Activated CD4-positive, alpha-beta T cell treated with anti-CD3 and anti-CD28 coated beads, Interleukin-2, amount 10 ng/mL, durations not matched to agents 24 days and 14 days (primary cell): ENCODE measurements at regions of chr14 and their contacts with region 1.

Region 1: GRCh38 chr14:23095196-23096108 is at the start of gene C14orf119:
- DNase-seq: peak; percentile 100
- H3K4me3 Mint-ChIP-seq: no peak within 1 kb of the TSS
- H3K27ac Mint-ChIP-seq: no peak within 1 kb of the TSS
- H3K4me1 Mint-ChIP-seq: peaks cover 29% of the 10 kb centered on the region
- H3K27me3 Mint-ChIP-seq: no peaks in the 10 kb centered on the region
- total RNA-seq, gene C14orf119: 50.9 and 54.3 TPM in 2 replicates

Region 2: DNA sequence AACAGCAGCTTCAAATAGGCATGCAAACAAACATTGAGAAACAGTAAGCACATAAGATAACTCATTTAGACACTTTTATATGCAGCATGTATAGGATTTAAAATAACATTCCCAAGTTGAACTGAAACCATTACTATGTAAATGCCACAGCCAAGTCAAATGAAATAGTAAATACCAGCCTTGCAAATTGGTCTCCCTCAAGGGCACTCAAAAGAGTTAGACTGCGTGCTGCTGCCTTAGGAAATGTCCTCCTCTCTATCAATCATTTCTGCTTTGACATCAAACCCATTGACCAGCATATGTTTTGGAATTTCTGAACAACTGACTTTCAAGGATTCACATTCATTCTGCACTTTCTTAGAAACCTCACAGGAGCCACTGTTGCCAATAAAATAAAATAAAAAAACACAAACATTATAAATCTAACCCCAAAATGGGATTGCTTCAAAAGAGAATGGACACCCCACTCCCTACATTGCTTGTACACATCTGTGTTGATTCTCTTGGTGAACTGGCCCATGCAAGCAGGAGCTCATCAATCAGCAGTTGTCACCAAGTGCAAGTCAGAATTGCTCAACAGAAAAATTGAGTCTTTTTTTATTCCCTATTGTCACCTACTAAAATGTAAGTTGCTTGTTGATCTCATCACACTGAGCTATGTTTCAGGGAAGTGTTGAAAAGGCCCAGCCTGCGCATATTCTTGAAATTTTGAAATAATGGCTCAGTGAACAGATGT is 762.6 kb before region 1 on chr14:
- intact Hi-C with region 1: no loop called
- DNase-seq: no peak
- H3K4me3 Mint-ChIP-seq: no peak overlapping the region
- H3K27ac Mint-ChIP-seq: no peak overlapping the region
- H3K4me1 Mint-ChIP-seq: no peaks in the 10 kb centered on the region
- H3K27me3 Mint-ChIP-seq: no peaks in the 10 kb centered on the region

Region 3: GRCh38 chr14:22918804-22919600 is 176.4 kb before region 1 on chr14 and contains the start of gene RBM23:
- intact Hi-C with region 1: loop called (anchors 1 kb)
- DNase-seq: peak; percentile 100
- H3K4me3 Mint-ChIP-seq: peak within 1 kb of the TSS; percentile 95
- H3K27ac Mint-ChIP-seq: peak within 1 kb of the TSS; percentile 100
- H3K4me1 Mint-ChIP-seq: peaks cover 27% of the 10 kb centered on the region
- H3K27me3 Mint-ChIP-seq: peaks cover 2% of the 10 kb centered on the region
- total RNA-seq, gene RBM23: 82.7 and 90.2 TPM in 2 replicates

Region 4: DNA sequence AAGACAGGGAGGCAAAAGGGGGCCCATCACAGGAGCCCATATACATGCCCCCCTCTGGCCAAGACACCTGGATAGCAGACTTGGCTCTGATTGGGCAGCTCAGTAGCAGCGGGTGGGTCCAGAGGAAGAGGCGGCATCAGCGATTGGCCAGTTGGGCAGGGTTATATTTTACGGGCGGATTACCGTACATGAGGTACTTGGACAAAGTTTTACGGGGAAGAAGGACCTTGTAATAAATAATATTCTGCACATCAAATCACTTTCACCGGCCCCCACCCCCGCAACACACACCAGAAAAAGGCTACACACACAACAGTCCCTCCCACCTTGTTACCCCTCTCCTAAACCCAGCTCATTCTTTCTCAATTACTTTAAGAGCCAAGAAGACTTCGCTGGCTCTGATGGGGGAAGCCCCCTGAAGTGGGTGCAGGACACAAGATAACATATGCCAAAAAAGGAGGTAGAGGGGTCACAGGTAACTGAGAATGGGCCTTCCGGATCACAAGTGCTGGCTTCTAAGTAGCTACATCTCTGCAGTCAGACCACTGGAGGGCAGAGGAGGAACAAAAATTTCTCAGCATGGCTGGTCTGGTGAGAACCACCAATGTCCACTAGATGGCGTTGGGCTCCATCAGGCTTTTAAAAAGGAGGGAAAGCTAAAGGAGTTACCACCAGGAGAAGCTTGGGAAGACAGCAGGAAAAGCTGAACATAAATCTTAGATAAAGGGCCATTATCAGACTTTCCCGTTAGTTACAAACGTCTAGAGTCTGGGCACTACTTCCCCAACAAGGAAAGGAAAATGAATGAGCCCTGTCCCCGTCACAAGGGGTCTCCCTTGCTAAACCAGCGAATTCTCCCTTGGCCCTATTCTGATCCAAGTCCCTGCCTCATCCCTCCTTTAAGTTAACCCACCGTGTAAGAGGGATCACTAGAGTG is 26.7 kb before region 1 on chr14:
- intact Hi-C with region 1: loop called (anchors 1 kb)
- DNase-seq: peak; percentile 93
- H3K4me3 Mint-ChIP-seq: peak overlapping the region; percentile 53
- H3K27ac Mint-ChIP-seq: peak overlapping the region; percentile 44
- H3K4me1 Mint-ChIP-seq: peaks cover 28% of the 10 kb centered on the region
- H3K27me3 Mint-ChIP-seq: no peaks in the 10 kb centered on the region

Region 5: DNA sequence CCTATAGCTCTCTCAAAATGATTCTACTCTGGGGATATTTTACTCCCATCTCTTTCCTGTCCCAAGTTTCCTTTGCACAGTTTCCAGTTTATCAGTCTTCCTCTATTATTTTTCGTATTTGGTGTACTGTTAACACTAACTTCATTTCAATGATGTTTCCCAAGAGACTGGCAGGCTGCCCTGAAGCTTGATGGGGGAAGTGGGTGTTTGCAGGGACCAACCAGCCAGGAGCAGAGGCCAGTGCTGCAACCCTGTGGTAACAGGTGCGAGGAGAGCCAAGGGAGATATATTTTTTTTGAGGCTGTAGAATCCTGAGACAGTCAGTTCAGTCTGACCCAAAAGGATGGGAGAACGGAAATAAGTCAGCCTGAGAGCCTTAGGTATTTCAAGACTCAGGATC is 35.4 kb after region 1 on chr14:
- intact Hi-C with region 1: no loop called
- DNase-seq: no peak
- H3K4me3 Mint-ChIP-seq: no peak overlapping the region
- H3K27ac Mint-ChIP-seq: no peak overlapping the region
- H3K4me1 Mint-ChIP-seq: peaks cover 4% of the 10 kb centered on the region
- H3K27me3 Mint-ChIP-seq: peaks cover 15% of the 10 kb centered on the region

Region 6: DNA sequence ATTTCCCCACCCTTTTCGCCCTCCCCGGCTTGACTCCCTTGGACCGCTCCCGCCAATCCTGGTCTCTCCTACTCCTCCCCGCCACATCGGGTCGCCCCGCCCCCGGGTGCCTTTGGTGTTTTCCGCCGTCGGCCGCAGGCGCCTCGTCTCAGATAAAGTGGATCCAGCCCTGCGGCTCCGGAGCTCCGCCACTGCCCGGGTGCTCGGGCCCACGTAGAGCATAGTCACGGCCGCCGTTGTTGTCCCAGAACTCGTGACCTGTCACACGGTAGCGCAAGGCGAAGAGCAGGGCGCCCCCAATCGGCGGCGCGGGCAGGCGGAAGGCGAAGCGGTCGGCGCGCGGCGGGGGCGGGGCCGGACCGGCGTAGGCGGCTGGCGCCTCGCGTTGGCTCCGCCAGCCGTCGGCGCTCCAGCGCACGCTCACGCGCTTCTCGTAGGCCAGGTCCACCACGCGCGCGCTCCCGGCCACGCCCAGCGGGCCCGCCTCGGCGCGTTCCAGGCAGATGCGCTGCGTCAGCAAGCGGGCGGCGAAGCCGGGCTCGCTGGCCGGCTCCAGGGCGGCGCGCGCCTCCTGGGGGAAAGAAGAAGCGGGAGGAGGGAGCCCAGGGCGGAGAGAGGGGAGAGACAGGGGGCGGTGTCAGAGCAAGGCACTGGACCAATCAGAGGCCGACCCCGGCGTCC is 206.0 kb after region 1 on chr14:
- intact Hi-C with region 1: loop called (anchors 2 kb)
- DNase-seq: peak; percentile 100
- H3K4me3 Mint-ChIP-seq: peak overlapping the region; percentile 98
- H3K27ac Mint-ChIP-seq: peak overlapping the region; percentile 99
- H3K4me1 Mint-ChIP-seq: peaks cover 30% of the 10 kb centered on the region
- H3K27me3 Mint-ChIP-seq: peaks cover 6% of the 10 kb centered on the region

Region 7: DNA sequence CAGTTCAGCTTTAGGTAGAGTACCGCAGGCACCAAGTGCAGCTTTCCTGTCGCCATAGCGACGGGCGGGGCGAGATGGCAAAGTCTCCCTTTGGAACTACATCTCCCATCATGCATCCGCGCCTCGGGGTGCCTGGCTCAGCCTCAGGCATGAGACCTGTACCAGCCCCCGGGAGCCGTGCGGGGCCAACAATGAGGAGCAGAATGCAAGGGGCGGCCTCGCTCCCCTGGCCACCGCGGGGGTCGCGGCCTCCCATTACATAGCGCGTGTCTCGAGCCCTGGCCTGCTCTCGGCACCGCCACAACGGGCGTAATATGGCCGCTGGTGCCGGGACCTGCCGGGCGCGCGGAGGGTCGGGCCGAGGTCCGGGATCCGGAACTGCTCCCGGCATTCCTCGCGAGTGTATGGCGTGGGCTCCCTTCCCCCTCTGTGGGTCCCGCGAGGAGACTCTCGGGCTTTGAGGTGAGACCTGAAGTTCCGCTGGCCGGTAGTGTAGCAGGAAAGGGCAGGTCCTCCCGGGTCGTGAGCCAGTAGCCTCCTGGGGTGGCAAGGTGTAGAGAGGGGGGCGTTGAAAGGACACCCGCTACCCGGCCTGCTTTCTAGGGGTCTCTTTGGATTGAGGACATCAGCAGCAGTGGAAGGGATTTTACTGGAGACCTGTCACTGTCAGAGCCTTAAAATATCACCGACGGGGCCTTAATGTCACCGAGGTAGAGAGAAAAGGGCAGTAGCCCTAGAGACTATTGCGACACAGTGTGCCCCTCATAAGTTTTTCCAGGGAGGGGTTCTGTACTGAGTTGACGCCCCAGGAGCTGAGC is 460.6 kb after region 1 on chr14 and contains the start of gene THTPA:
- intact Hi-C with region 1: loop called (anchors 10 kb)
- DNase-seq: peak; percentile 98
- H3K4me3 Mint-ChIP-seq: peak within 1 kb of the TSS; percentile 95
- H3K27ac Mint-ChIP-seq: peak within 1 kb of the TSS; percentile 98
- H3K4me1 Mint-ChIP-seq: peaks cover 30% of the 10 kb centered on the region
- H3K27me3 Mint-ChIP-seq: no peaks in the 10 kb centered on the region
- total RNA-seq, gene THTPA: 14.5 and 16.7 TPM in 2 replicates